Activated CD4-positive, alpha-beta T cell treated with anti-CD3 and anti-CD28 coated beads for 36 hours (primary cell): ENCODE measurements at regions of chr14 and their contacts with region 1.

Region 1: GRCh38 chr14:68788996-68789820 is 3.7 kb downstream of the ZFP36L1 start:
- DNase-seq: peak; percentile 94
- ATAC-seq: peak; percentile 47
- H3K4me3 Mint-ChIP-seq: peak overlapping the region; percentile 90
- H3K27ac Mint-ChIP-seq: peak overlapping the region; percentile 100
- H3K4me1 Mint-ChIP-seq: peaks cover 53% of the 10 kb centered on the region
- H3K27me3 Mint-ChIP-seq: no peaks in the 10 kb centered on the region

Region 2: DNA sequence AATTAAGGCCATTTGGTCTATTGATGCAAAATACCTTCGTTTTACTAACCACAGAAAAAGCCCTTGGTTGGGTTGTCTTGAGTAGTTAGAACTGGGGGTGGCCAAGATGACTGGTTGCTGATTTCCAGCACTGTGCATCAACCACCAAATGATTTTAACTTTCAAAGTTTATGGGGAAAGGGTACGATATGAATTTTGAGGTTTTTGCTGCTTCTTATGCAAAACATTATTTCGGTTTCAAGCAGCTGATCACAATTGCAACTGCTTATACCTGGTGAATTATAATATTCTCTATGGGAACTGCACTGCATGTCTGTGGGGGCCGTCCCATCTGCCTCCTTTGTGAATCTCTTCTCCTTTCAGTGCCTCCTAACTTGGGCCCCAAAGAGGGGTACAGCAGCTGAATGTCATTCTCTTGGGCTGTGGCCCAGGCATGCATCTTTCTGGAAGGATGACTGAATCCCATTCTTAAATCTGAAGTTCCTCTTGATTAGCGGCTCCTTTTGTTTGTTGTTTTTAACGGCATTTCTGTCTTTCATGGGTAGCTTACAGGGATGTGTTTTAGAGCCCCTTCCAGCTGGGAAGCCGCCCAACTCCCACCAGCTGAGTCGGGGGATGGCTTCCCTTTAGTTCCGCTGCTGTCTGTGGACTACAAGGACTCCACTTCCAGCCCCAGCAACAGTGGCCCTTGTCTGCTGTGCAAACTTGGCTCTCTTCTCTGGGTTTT is 476.2 kb before region 1 on chr14:
- CTCF ChIA-PET with region 1: no interaction called
- POLR2A ChIA-PET with region 1: interaction called, 10 read pairs
- intact Hi-C with region 1: no loop called
- DNase-seq: peak; percentile 71
- ATAC-seq: peak; percentile 93
- H3K4me3 Mint-ChIP-seq: no peak overlapping the region
- H3K27ac Mint-ChIP-seq: no peak overlapping the region
- H3K4me1 Mint-ChIP-seq: peaks cover 30% of the 10 kb centered on the region
- H3K27me3 Mint-ChIP-seq: no peaks in the 10 kb centered on the region

Region 3: GRCh38 chr14:68482772-68483395 is 306.3 kb before region 1 on chr14:
- CTCF ChIA-PET with region 1: no interaction called
- POLR2A ChIA-PET with region 1: no interaction called
- intact Hi-C with region 1: loop called (anchors 5 kb)
- DNase-seq: no peak
- ATAC-seq: no peak
- H3K4me3 Mint-ChIP-seq: no peak overlapping the region
- H3K27ac Mint-ChIP-seq: peak overlapping the region; percentile 61
- H3K4me1 Mint-ChIP-seq: peaks cover 56% of the 10 kb centered on the region
- H3K27me3 Mint-ChIP-seq: no peaks in the 10 kb centered on the region

Region 4: DNA sequence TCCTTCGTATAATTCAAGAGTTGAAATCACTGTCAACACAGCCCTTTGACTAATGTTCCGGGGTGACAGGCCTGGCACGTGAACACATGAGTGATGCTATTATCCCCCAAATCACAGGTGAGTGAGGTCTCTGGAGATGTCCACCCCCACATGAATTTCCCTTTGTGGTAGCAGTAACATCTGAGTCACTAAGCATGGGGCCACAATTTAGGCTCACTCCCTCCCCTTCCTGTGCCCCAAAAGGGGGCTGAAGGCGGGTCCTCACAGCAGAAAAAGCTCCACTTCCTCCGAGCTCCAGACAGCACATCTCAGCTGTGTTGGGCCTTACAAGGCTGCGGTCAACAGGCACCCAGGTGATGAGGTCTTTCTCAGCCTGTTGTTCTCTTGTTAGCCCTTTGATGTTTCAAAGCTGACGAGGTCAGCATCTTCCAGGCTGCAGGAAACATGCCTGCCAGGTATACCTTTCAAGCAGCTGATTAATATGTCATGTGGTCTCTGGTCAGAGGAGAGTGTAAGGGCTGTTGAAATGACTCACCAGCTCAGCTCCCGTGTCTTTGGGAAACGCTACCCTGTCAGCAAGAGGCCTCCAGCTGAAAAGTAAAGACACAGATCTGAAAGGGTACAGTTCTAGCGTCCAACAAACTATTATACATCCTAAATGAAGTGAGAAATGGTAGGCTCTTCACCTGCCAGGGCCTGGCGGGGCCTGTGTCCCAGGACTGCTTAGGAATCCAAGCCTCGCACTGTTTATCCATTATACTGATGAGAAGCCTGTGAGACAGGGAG is 103.6 kb before region 1 on chr14:
- CTCF ChIA-PET with region 1: interaction called, 16 read pairs
- POLR2A ChIA-PET with region 1: interaction called, 13 read pairs
- intact Hi-C with region 1: loop called in 1 of 2 experiments (anchors 1 kb)
- DNase-seq: peak; percentile 86
- ATAC-seq: peak; percentile 87
- H3K4me3 Mint-ChIP-seq: peak overlapping the region; percentile 31
- H3K27ac Mint-ChIP-seq: peak overlapping the region; percentile 81
- H3K4me1 Mint-ChIP-seq: peaks cover 57% of the 10 kb centered on the region
- H3K27me3 Mint-ChIP-seq: no peaks in the 10 kb centered on the region

Region 5: GRCh38 chr14:68734231-68734775 is 54.9 kb before region 1 on chr14:
- CTCF ChIA-PET with region 1: no interaction called
- POLR2A ChIA-PET with region 1: no interaction called
- intact Hi-C with region 1: loop called (anchors 2 to 5 kb)
- DNase-seq: peak; percentile 61
- ATAC-seq: peak; percentile 59
- H3K4me3 Mint-ChIP-seq: no peak overlapping the region
- H3K27ac Mint-ChIP-seq: peak overlapping the region; percentile 85
- H3K4me1 Mint-ChIP-seq: peaks cover 47% of the 10 kb centered on the region
- H3K27me3 Mint-ChIP-seq: no peaks in the 10 kb centered on the region

Region 6: GRCh38 chr14:68824517-68825347 is 35.5 kb after region 1 on chr14:
- CTCF ChIA-PET with region 1: interaction called, 14 read pairs
- POLR2A ChIA-PET with region 1: interaction called, 12 read pairs
- intact Hi-C with region 1: loop called in 1 of 2 experiments (anchors 5 kb)
- DNase-seq: peak; percentile 68
- ATAC-seq: peak; percentile 32
- H3K4me3 Mint-ChIP-seq: no peak overlapping the region
- H3K27ac Mint-ChIP-seq: no peak overlapping the region
- H3K4me1 Mint-ChIP-seq: peaks cover 26% of the 10 kb centered on the region
- H3K27me3 Mint-ChIP-seq: no peaks in the 10 kb centered on the region

Region 7: DNA sequence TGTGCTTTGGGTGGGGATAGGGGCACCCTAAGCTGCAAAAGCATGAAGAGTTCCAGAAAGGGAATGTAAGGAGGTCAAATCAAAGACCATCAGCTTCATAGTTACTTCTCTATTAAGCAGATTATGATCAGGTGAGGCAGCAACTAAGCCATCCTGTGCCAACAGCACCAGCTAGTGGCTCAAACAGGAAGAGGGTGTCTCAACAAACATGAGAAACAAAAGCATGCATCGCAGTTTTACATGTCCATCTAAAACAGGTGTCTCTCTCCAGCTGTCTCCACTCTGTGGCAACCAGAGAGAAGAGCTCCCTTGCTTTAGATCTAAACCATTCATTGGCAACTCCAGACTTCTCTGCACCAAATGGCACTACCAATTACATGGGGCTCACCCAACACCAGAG is 137.0 kb after region 1 on chr14:
- CTCF ChIA-PET with region 1: no interaction called
- POLR2A ChIA-PET with region 1: no interaction called
- intact Hi-C with region 1: no loop called
- DNase-seq: peak; percentile 51
- ATAC-seq: no peak
- H3K4me3 Mint-ChIP-seq: no peak overlapping the region
- H3K27ac Mint-ChIP-seq: no peak overlapping the region
- H3K4me1 Mint-ChIP-seq: peaks cover 45% of the 10 kb centered on the region
- H3K27me3 Mint-ChIP-seq: no peaks in the 10 kb centered on the region

Region 8: DNA sequence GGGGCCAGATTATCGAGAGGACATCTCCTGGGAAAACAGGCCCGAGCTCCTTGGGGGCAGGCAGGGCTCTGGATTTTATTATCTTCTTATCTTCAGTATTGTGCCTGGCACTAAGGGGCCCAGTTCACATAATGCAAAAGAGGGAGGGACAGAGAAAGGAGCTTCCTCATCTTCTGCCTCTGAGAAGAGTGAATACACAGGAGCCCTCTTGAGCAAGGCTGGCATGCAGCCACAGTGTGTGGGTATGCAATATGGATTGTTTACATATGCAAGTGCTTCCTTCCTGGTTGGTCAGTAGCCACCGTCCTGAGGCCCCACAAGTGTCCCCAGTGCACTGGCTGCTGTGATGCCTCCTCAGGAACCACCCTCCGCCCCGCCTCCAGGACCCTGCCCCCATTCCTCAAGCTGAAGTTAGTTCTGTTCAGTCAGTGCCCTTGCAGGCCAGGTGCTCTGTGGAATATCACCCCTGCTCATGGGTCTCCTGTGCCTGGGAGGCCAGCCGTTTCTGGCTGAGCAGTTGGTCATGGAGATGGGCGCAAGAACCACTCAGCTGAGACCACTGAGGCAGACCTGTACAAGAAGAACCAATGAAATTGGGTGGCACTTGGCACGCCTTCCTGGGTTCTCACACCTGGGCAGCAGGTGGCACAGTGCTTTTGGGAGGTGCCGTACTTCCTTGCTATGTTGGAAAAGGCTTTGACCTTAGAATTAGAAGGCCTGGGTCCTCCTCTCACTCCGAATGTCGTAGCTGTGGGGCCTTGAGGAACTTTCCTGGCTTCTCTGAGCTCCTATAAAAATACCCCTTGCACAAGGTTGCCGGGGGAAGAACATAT is 225.0 kb after region 1 on chr14:
- CTCF ChIA-PET with region 1: no interaction called
- POLR2A ChIA-PET with region 1: no interaction called
- intact Hi-C with region 1: no loop called
- DNase-seq: no peak
- ATAC-seq: no peak
- H3K4me3 Mint-ChIP-seq: no peak overlapping the region
- H3K27ac Mint-ChIP-seq: no peak overlapping the region
- H3K4me1 Mint-ChIP-seq: peaks cover 6% of the 10 kb centered on the region
- H3K27me3 Mint-ChIP-seq: no peaks in the 10 kb centered on the region